Ovary (tissue), 10 donors: ENCODE measurements at regions of chr2 and their contacts with region 1.

Region 1: DNA sequence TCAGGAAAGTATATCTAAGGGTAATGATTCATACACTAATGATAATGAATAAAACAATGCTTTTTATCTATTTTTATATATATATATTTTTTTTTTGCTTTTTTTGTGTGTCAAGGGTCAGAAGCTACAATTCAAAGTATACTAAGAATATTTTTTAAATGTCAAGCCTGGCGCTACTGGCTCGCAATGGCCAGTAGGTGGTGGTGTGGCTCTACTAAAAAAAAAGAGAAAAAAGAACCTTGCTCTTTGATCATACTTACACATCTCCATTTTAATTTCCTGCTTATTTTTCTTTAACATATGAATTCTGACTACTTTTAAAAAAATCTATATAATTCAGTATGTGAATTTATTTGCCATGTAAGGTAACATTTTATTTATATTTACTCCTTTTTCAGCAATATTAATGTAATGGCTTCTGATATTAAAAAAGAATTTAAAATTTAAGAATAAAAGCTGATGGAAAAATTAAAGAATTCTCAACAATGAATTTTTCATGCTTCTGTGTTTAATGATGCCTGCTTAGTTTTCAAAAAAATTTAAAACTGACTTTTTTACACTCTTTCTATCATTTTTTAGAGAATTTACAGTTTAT is 232.9 kb downstream of the GULP1 start:
- DNase-seq: peak in 3 of 5 donors; percentile 31 to 47 (median 47)
- H3K4me3 ChIP-seq: no peak overlapping the region
- H3K27ac ChIP-seq: no peak overlapping the region
- H3K4me1 ChIP-seq: peaks cover 2% of the 10 kb centered on the region
- H3K27me3 ChIP-seq: no peaks in the 10 kb centered on the region
- CTCF ChIP-seq: peak; percentile 48 to 57 (median 51)
- EP300 ChIP-seq: no peak
- POLR2A ChIP-seq: no peak

Region 2: DNA sequence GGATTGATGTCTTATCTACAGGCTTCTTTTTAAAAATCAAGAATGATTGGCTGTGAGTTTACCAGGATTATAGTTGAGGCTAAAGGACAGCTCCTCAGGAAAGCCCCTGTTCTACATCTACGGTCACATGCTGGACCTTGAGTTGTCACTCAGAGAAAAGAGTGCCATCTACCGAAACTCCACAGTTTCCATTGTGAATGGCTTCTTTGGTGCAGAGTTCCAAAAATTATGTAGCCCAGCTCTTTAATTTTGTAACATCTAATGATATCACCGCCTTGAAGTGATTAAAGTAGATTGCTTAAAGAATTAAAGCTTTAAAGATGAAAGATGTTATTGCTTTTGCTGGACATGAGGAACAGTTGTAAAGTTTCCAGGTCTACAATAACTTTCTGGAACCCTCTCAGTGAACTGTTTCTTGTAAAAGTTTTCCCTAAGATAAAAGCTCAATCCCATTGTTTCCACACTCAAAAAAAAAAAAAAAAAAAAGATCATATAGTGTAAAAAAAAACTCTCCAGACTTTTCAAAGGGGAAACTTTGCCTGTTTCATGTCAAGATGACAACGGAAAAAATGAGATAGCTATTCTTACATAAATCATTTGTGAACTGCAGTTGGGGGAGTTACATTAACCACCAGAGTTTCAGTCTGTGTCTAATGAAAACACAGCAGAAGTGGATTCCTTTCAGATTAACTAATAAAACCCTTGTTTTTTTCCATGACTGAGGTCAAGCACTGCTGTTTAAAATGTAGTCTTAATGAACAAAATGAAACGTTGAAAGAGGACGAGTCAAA is 453.9 kb after region 1 on chr2:
- intact Hi-C with region 1: loop called in 2 of 4 experiments (anchors 2 to 5 kb)
- DNase-seq: peak in 2 of 5 donors; percentile 27 to 44
- H3K4me3 ChIP-seq: peak overlapping the region; percentile 11
- H3K27ac ChIP-seq: peak overlapping the region; percentile 9 to 79
- H3K4me1 ChIP-seq: peaks cover 1% of the 10 kb centered on the region
- H3K27me3 ChIP-seq: no peaks in the 10 kb centered on the region
- CTCF ChIP-seq: peak in 1 of 3 donors; percentile 19
- EP300 ChIP-seq: peak; percentile 23
- POLR2A ChIP-seq: no peak

Region 3: DNA sequence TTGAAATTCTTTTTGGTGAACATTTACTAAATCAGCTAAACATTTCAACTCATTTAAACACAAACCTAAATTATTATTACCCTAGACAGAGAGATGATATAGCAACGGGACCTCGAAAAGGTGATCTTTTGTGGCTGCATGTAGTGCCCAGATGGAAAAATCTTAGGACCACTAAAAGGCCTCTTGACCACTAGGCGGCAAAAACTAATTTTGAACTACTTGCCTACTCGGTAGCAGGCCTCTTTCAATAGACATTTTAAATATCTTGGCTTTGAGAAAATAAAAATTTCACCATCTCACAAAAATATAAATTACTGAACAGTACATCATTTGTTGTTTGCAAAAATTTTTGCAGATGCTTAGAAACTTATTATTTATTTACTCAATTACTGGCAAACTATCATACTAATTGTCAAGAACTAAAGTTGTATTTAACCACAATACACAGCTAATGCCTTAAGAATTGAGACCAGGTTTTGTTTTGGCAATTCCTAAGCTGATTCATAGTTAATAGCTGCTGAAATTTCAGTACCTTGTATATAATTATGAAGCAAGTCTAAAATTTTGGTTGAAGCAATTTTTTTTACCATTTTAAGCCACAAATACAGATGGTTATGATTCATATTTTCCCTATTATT is 458.9 kb after region 1 on chr2:
- intact Hi-C with region 1: loop called in 2 of 4 experiments (anchors 5 kb)
- DNase-seq: no peak
- H3K4me3 ChIP-seq: no peak overlapping the region
- H3K27ac ChIP-seq: no peak overlapping the region
- H3K4me1 ChIP-seq: peaks cover 4% of the 10 kb centered on the region
- H3K27me3 ChIP-seq: no peaks in the 10 kb centered on the region
- CTCF ChIP-seq: peak in 2 of 3 donors; percentile 28 to 46
- EP300 ChIP-seq: no peak
- POLR2A ChIP-seq: no peak

Region 4: DNA sequence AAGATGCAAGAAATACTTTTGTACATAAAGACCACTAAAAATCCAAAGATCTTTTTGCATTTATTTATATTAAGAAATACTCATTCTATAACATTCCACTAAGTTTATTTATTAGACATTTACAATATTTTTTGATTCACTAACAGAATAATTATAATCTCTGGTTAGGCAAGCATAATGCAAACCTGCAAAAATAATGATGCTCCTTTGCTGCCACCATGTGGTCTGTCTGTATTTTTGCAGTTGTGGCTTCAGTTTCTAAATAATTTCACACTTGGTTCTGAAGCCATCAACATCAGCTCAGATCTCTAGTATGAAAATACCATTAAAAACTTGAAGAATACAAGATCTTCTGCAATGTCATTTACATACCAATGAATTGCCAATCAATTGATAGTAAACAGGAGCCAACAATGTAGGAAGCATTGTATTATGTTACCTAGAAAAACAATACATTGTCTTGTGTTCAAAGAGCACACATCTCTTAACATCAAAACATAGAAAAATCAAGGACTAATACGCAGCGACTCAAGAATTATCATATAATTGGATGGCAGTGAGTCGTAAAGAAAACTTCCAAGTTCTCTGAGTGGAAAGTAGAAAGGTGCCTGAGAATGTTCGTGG is 887.8 kb after region 1 on chr2:
- intact Hi-C with region 1: loop called in 2 of 4 experiments (anchors 5 to 10 kb)
- DNase-seq: peak in 4 of 5 donors; percentile 38 to 59 (median 47)
- H3K4me3 ChIP-seq: no peak overlapping the region
- H3K27ac ChIP-seq: peak overlapping the region in 1 of 2 donors; percentile 48
- H3K4me1 ChIP-seq: no peaks in the 10 kb centered on the region
- H3K27me3 ChIP-seq: no peaks in the 10 kb centered on the region
- CTCF ChIP-seq: peak; percentile 53 to 90 (median 86)
- EP300 ChIP-seq: no peak
- POLR2A ChIP-seq: no peak